GM10248 (cell line): ENCODE measurements at regions of chr6 and their contacts with region 1.

Region 1: DNA sequence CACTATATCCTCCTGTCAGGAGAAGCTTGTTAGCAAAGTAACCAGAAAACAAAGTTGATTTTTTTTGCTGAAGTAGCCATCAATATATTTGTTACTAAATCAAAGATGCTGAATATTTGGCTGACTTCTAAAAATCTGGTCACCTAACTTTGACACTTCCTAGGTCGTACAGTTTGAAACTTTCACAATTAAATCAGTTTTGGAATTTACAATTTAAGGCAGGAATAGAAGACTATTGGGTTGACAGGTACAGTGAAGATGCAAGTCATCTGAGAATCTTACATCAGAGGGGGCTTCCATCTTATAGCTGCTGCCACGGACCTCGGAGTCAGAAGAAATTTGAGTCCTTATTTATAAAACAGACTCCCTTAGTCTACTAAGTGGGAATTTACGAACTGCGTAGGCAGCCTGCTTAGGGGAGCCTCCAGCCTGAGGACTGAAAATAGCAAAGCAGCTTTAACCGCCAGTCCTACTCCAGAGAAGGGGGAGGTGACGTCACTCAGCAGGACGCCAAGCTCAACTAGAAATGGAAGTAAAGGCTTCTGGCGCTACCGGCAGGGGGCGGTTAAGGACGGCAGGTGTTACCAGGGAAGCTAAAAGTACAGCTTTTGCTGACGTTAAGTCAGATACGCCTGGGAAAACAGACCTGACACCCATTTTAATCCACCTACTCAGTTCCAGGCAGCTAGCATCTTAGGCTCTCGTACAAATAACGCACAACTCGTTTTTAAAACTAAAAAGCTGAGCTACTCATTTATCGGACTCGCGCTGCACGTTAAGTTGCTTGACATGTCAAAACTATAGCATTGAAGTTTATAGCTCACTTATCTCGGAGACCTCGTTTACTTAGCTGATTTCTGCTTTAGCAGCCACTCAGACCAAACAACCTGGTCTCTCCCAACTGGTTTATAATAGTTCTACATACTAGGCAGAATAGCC is 61.1 kb upstream of the HFE start:
- DNase-seq: peak; percentile 62
- CTCF ChIP-seq: peak; percentile 78

Region 2: DNA sequence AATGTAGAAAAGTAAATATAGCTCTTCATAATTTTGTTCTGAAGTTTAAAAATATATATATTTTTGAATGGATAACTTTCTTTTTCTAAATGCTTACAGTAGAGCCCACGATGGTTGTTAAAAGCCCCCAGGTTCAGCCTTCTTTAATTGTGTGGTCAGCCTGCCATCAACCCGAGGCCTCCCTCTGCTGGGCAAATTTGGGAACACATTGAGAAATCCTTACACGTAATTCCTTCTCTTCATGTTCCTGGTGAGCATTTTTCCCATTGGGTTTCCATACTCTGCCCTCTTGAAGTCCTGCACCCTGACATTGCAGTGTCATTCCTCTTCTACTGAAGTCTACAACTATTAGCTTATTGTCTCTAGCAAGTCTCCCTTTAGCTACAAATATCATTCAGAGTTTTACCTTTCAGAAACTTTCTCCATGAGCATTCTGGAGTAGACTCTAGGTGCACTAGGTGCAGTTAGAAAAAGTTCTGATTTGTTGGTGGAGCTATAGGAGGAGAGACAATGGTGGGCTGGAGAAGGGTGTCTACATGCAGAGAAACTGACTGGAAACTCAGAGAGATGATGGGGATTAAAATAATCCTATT is 23.0 kb before region 1 on chr6:
- CTCF ChIA-PET with region 1: interaction called, 163 read pairs
- POLR2A ChIA-PET with region 1: interaction called, 7 read pairs
- DNase-seq: peak; percentile 63
- CTCF ChIP-seq: peak; percentile 82

Region 3: GRCh38 chr6:26045065-26045927 is 19.1 kb after region 1 on chr6:
- CTCF ChIA-PET with region 1: interaction called, 136 read pairs
- POLR2A ChIA-PET with region 1: interaction called, 140 read pairs
- DNase-seq: peak; percentile 88
- CTCF ChIP-seq: peak; percentile 12

Region 4: DNA sequence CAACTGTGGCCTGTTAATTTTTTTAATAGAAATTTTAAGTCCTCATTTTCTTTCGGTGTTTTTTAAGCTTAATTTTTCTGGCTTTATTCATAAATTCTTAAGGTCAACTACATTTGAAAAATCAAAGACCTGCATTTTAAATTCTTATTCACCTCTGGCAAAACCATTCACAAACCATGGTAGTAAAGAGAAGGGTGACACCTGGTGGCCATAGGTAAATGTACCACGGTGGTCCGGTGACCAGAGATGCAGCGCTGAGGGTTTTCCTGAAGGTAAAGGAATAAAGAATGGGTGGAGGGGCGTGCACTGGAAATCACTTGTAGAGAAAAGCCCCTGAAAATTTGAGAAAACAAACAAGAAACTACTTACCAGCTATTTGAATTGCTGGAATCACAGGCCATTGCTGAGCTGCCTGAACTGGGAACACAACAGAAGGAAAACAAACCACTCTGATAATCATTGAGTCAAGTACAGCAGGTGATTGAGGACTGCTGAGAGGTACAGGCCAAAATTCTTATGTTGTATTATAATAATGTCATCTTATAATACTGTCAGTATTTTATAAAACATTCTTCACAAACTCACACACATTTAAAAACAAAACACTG is 71.2 kb after region 1 on chr6:
- CTCF ChIA-PET with region 1: interaction called, 25 read pairs
- POLR2A ChIA-PET with region 1: no interaction called
- DNase-seq: peak; percentile 40
- CTCF ChIP-seq: peak; percentile 75

Region 5: GRCh38 chr6:27146706-27147505 is 1120.7 kb after region 1 on chr6:
- CTCF ChIA-PET with region 1: no interaction called
- POLR2A ChIA-PET with region 1: interaction called, 13 read pairs
- DNase-seq: peak; percentile 95
- CTCF ChIP-seq: no peak